ENCODE measurements at regions of chr15 and their contacts with region 1.

Region 1: GRCh38 chr15:98442379-98442833 is 205.9 kb upstream of the IGF1R start:
- DNase-seq: peak; percentile 84
- H3K4me3 ChIP-seq: no peak overlapping the region
- H3K27ac ChIP-seq: no peak overlapping the region
- H3K4me1 ChIP-seq: no peaks in the 10 kb centered on the region
- H3K27me3 ChIP-seq: no peaks in the 10 kb centered on the region
- CTCF ChIP-seq: peak; percentile 91

Region 2: GRCh38 chr15:98518823-98519561 is 76.6 kb after region 1 on chr15:
- CTCF ChIA-PET with region 1: no interaction called
- POLR2A ChIA-PET with region 1: no interaction called
- intact Hi-C with region 1: loop called (anchors 1 kb)
- DNase-seq: peak; percentile 85
- H3K4me3 ChIP-seq: no peak overlapping the region
- H3K27ac ChIP-seq: no peak overlapping the region
- H3K4me1 ChIP-seq: no peaks in the 10 kb centered on the region
- H3K27me3 ChIP-seq: no peaks in the 10 kb centered on the region
- CTCF ChIP-seq: peak; percentile 87

Region 3: DNA sequence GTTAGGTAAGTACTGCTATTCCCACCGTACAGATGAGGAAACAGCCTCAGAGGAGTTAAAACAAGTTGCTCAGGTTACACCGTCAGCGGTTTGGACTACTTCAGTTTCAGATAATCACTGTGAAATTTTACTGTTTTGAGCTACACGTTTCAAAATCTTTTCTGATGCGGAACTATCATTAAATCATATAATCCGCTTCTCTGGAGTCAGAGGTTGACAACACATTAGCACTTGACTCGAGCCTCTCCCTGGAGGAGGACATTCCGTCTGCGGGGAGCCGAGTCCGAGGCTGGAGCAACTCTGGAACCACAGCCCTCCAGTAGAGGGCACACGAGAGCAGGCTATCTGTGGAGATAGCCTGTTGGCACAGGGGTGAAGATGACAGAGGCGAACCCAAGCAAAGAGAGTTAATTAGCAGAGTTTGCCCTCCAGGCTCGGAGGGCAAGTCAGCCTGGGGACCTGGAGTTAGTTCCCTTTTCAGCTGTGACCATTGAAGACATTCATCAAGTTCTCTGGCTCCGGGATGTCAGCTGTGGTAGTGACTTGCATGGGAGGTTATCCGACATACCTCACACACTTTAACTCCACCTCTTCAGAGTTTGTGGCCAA is 337.2 kb after region 1 on chr15:
- CTCF ChIA-PET with region 1: no interaction called
- POLR2A ChIA-PET with region 1: no interaction called
- intact Hi-C with region 1: loop called (anchors 5 kb)
- DNase-seq: peak; percentile 87
- H3K4me3 ChIP-seq: no peak overlapping the region
- H3K27ac ChIP-seq: no peak overlapping the region
- H3K4me1 ChIP-seq: peaks cover 42% of the 10 kb centered on the region
- H3K27me3 ChIP-seq: no peaks in the 10 kb centered on the region
- CTCF ChIP-seq: peak; percentile 97

Region 4: DNA sequence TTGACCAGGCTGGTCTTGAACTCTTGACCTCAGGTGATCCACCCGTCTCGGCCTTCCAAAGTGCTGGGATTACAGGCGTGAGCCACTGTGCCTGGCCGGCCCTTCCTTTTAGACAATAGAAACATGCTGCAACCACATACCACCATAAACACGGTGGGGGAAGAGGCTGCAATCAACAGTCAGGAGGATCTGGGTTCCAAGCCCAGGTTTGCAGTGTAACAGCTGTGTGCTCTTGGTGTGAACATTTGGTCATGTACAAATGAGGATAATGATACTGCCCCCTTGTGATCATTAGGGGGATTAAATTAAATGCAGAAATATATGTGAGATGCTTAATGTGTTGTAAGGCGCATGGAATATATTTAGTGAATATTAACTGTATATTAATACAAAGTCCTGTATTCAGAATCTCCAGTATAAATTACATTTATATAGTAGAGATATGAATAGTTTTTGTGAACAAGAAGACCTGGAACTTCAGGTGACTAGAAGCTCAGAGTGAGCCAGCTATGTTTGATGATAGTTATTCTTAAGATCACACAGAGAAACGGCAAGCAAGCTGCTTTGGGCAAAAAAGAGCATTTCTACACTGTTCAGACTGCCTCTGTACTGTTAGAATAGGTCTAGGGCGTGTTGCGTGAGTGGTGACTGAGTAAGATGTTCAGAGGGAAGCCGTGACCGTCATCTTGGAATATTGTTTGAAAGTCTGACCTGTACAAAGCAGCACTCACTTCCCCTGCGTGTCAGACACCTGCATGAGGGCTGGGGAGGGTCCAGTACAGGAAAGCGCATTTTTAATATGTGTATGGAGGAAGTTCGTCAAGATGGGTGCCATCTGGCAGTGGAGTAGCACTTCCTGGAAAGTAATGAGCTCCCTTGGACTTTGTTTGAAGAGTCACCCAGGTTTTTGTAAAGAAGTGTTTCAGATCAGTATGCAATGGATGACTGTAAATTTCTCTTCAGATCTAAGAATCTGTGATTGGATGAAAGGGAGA is 439.4 kb after region 1 on chr15:
- CTCF ChIA-PET with region 1: no interaction called
- POLR2A ChIA-PET with region 1: no interaction called
- intact Hi-C with region 1: loop called (anchors 10 kb)
- DNase-seq: peak; percentile 85
- H3K4me3 ChIP-seq: no peak overlapping the region
- H3K27ac ChIP-seq: no peak overlapping the region
- H3K4me1 ChIP-seq: peaks cover 4% of the 10 kb centered on the region
- H3K27me3 ChIP-seq: no peaks in the 10 kb centered on the region
- CTCF ChIP-seq: peak; percentile 71

Region 5: DNA sequence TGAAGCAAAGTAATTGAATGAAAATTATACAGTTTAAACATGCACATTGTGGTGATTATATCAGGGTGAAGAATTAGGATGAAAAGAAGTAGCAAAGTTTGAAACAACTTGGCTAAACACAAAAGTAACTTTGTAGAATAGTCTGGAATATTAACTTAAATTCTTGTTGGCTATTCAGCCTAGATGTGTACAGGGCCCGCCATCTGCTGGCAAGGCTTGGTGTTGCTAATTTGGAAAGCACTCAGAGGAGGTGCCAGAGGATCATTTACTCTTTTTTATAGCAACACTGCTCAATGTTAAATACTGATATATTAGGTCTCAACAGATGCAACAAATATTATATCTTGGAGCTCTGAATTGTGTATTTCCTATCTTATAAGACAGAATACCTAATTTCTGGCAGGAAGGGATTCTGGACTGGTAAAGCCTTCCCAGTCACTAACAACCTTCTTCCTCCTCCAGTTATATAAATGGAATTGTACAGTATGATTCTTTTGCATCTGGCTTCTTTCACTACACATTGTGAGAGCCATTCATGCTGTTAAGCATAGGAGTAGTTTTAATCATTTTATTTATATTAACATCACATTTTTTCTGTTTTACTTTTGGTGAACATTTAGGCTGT is 770.9 kb after region 1 on chr15:
- CTCF ChIA-PET with region 1: no interaction called
- POLR2A ChIA-PET with region 1: no interaction called
- intact Hi-C with region 1: loop called (anchors 5 kb)
- DNase-seq: peak; percentile 71
- H3K4me3 ChIP-seq: no peak overlapping the region
- H3K27ac ChIP-seq: no peak overlapping the region
- H3K4me1 ChIP-seq: no peaks in the 10 kb centered on the region
- H3K27me3 ChIP-seq: no peaks in the 10 kb centered on the region
- CTCF ChIP-seq: peak; percentile 93